GM18951 (cell line): ENCODE measurements at regions of chr3 and their contacts with region 1.

Region 1: DNA sequence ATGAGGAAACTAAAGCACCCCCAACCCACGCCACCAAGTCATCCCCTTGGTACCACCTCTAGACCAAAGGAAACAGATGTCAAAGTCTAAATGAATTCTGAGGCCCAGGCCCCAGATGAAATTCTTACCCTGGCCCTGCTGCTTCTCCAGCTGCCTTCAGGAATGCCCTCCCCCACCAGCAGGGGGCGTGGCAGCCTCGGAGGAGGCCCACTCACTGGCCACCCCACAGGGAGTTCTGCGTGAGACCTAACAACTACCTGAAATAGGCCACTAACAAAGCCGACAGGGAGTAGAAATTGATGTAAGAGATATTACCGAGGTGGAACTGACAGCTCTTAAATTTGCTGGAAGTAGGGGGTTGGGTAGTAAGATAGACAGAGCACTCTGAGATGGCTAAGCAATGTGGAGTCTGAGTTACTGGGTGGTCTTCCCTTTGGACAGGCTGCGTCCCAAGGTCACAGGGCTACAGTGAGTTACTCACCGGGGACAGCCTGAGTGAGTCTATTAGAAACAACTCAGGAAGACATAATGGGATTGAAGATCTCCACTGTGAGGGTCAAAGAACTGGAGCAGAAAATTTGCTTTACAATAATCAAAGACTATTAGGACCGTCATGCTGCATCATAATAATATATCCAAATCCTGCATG is 240.7 kb downstream of the SHOX2 start:
- POLR2A ChIP-seq: no peak

Region 2: DNA sequence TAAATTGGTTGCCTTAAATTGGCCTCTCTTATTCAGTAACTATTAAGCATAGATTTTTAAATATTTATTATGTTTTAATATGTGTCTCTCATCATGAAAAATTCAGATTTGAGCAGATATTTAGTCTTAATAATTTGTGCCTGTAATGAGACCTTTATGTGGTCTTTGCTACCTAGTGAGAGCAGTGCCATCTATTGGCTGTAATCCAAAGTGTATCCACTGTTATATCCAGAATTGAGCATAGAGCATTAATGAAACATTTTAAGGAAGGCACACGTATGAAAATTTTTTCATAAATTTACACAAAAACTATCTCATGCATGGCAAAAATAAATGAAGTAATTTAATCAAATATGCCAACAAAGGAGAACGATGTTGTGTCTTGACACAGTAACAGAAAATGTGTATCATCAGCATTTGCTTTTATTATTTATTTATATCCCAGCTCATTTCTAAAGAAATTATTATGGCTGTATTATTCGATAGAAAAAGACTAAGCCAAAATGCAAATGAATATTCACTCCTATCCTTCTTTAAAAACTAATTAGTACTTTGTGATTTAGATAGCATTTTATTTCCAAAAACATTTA is 448.0 kb after region 1 on chr3:
- in situ Hi-C with region 1: loop called (anchors 25 kb)
- POLR2A ChIP-seq: no peak

Region 3: GRCh38 chr3:158434412-158435038 is 569.0 kb after region 1 on chr3:
- in situ Hi-C with region 1: loop called (anchors 25 kb)
- POLR2A ChIP-seq: no peak